GM13976 (cell line): ENCODE measurements at regions of chr17 and their contacts with region 1.

Region 1: GRCh38 chr17:27760069-27760885 is 40.1 kb downstream of the NOS2 start:
- DNase-seq: peak; percentile 82
- CTCF ChIP-seq: peak; percentile 88

Region 2: DNA sequence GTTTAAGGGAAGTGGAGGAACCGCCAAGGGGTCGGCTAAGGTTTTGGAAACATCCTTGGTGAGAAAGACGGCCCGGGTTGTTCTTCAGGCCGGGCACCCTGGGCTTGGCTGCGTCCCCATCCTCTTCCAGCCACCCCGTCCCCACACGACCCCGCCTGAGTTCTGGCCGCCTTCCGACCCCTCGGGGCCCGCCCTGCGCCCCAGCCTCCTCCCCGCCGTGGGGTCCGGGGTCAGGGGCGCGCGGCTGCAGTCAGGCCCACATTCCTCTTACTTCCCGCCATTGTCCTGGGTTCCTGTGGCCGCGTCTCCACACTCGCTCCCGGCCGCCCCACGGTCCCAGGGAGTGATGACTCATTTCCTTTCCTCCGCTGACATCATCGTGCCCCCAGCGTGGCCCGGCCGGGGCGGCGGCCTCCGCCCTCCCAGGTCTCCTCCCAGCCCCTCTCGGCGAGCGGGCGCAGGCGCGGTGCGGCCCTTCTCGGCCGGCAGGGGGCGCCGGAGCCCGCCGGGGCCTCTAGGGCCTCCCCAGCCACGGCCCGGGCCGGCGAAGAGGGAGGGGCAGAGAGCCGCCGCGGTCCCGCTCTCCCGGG is 406.7 kb before region 1 on chr17:
- in situ Hi-C with region 1: loop called (anchors 10 kb)
- DNase-seq: peak; percentile 98
- CTCF ChIP-seq: peak; percentile 92

Region 3: DNA sequence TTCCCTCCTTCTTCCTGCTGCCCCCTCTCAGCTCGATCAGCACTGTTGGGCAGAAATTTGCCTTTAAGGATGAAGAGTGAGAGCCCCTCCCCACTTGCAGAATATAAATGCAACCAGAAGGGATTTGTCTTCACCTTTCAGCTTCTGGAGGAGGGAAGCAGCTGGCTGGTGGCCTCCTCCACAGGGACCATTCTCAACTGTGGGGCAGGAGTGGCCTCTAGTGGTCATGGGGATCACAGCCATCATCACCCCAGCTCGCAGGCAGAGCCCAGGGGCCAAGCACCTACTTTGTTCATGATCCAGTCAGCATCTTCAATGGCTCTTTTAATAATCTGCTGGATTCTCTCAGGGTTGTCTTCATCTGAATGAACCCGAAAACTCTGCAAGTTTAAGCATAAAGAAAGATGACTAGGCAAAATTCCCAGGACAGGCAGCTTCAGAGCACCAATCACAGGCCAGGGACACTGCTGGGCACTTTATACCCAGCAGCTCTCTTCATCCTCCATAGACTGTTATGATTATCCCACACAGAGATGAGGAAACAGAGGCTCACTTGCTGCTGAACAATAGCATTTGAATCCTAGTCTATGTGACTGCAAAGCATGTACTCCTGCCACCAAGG is 119.8 kb after region 1 on chr17:
- in situ Hi-C with region 1: loop called (anchors 10 kb)
- DNase-seq: peak; percentile 88
- CTCF ChIP-seq: peak; percentile 91